ENCODE measurements at regions of chr9 and their contacts with region 1.

Region 1: GRCh38 chr9:11537566-11537965 is 924.8 kb upstream of the PTPRD start:
- DNase-seq: no peak
- H3K4me3 ChIP-seq: no peak overlapping the region
- H3K27ac ChIP-seq: no peak overlapping the region
- H3K4me1 ChIP-seq: no peaks in the 10 kb centered on the region
- H3K27me3 ChIP-seq: no peaks in the 10 kb centered on the region
- CTCF ChIP-seq: no peak

Region 2: GRCh38 chr9:11500780-11501179 is 36.8 kb before region 1 on chr9:
- intact Hi-C with region 1: loop called (anchors 5 kb)
- DNase-seq: no peak
- H3K4me3 ChIP-seq: no peak overlapping the region
- H3K27ac ChIP-seq: no peak overlapping the region
- H3K4me1 ChIP-seq: no peaks in the 10 kb centered on the region
- H3K27me3 ChIP-seq: no peaks in the 10 kb centered on the region
- CTCF ChIP-seq: no peak

Region 3: GRCh38 chr9:11821306-11821975 is 283.9 kb after region 1 on chr9:
- intact Hi-C with region 1: no loop called
- DNase-seq: no peak
- H3K4me3 ChIP-seq: no peak overlapping the region
- H3K27ac ChIP-seq: no peak overlapping the region
- H3K4me1 ChIP-seq: no peaks in the 10 kb centered on the region
- H3K27me3 ChIP-seq: no peaks in the 10 kb centered on the region
- CTCF ChIP-seq: no peak

Measured in ascending aorta (tissue), 2 donors.